ENCODE measurements at regions of chr9 and their contacts with region 1.

Region 1: DNA sequence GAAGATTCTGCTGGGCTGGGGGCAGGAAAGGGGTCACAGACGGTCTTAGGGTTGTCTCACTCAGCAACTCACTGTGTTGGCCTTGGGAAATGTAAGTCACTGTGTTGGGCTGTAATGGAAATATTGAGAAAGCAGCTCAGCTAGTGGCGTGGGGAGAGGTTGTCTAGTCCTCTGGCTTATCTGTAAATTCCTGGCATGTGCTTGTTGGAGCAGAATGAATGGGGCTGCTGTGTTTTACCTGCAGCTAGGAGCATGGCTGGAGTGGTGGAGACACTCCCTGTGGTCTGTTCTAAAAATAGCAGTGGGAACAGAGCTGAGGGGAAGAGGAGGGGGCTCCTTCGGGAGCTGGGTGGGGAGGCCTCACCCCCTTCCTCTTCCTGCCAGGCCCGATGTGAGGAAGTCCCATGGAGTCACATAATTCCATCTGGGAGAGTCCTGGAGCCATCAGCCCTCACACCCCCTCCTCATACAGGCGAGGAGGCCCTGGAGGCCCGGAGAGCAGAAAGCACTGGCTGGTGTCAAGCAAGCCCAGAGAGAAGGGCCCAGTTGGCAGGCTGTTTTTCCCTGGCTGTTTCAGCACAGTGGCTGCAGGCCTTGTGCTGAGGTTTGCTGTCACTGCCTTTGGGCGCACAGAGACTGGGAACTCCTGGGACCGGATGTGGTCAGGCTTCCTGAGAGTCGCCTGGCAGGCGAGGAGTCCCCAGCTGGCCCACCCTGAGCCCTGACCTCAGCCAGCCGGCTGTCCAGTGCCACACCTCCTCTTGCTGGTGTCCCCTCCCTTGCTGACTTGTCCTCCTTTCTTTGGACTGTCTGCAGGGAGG is 84.9 kb downstream of the RGS3 start:
- DNase-seq: peak in 1 of 2 experiments; percentile 82
- H3K4me3 ChIP-seq: no peak overlapping the region
- H3K27ac ChIP-seq: peak overlapping the region; percentile 38
- H3K4me1 ChIP-seq: peaks cover 11% of the 10 kb centered on the region
- H3K27me3 ChIP-seq: no peaks in the 10 kb centered on the region
- CTCF ChIP-seq: no peak

Region 2: DNA sequence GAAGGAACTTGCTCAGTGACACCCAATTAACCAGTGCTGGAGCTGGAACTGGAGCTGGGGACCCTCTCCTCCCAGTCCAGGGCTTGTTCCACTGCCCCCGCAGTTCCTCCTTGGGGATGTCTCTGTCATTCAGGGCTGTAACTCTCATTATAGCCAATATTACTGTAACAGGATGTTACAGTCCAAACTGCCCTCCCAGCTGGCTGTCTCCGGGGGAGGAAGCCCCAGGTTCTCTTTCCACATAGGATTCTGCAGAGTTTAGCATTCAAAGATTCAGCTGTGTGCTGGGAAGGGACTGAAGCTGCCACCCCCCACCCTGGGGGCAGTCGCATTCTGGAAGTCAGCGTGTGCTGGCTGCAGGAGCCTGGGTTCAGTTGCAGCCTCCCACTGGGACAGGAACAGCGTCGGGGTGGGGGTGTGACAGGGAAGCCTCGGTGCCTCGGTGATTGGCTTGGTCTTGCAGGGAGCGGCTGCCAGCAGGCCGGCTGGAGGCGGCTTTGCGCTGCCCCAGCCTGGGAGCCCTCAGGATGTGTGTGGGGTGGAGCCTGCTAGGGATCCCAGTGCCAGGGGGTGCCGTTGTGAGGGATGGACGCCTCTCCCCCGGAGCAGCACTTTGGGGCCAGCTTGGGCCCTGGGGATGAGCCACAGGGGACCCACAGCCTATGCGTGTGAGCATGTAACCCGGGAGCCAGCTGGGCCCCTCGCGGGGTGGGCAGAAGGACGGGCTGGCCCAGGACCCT is 16.2 kb after region 1 on chr9:
- CTCF ChIA-PET with region 1: no interaction called
- POLR2A ChIA-PET with region 1: interaction called, 5 read pairs
- intact Hi-C with region 1: loop called (anchors 1 kb)
- DNase-seq: peak; percentile 46 to 74
- H3K4me3 ChIP-seq: peak overlapping the region; percentile 69
- H3K27ac ChIP-seq: peak overlapping the region; percentile 90
- H3K4me1 ChIP-seq: peaks cover 25% of the 10 kb centered on the region
- H3K27me3 ChIP-seq: no peaks in the 10 kb centered on the region
- CTCF ChIP-seq: no peak

Measured in PC-9 (cell line).